ENCODE measurements at regions of chrX and their contacts with region 1.

Region 1: GRCh38 chrX:72126539-72127140 is 5.1 kb downstream of the RTL5 start:
- DNase-seq: peak; percentile 86
- H3K4me3 ChIP-seq: no peak overlapping the region
- H3K27ac ChIP-seq: no peak overlapping the region
- H3K4me1 ChIP-seq: peaks cover 56% of the 10 kb centered on the region
- H3K27me3 ChIP-seq: no peaks in the 10 kb centered on the region
- CTCF ChIP-seq: peak; percentile 67 to 80
- POLR2A ChIP-seq: no peak

Region 2: DNA sequence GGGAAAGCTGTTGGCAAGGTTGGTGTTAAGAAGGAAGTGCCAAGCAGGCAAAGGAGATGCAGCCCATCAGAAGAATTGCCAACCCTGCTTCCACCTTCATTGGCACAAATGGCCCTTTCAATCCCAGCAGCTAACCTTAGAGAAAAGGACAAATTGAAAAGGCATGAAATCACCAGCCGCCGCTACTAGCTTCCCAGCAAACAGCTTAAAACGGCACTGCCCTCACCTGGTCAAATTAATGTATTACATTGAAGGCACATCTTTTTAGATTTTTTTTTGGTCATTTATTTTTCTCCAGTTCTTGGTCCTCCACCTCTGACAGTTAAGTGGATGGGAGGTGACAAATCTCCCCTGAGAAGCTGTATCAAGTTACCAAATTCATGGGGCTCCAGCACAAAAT is 267.0 kb before region 1 on chrX:
- CTCF ChIA-PET with region 1: no interaction called
- POLR2A ChIA-PET with region 1: no interaction called
- dilution Hi-C with region 1: no loop called
- intact Hi-C with region 1: loop called (anchors 2 kb)
- DNase-seq: peak; percentile 20
- H3K4me3 ChIP-seq: no peak overlapping the region
- H3K27ac ChIP-seq: no peak overlapping the region
- H3K4me1 ChIP-seq: no peaks in the 10 kb centered on the region
- H3K27me3 ChIP-seq: peaks cover 0 to 1% of the 10 kb centered on the region in 2 experiments
- CTCF ChIP-seq: peak; percentile 29 to 31
- POLR2A ChIP-seq: no peak

Region 3: DNA sequence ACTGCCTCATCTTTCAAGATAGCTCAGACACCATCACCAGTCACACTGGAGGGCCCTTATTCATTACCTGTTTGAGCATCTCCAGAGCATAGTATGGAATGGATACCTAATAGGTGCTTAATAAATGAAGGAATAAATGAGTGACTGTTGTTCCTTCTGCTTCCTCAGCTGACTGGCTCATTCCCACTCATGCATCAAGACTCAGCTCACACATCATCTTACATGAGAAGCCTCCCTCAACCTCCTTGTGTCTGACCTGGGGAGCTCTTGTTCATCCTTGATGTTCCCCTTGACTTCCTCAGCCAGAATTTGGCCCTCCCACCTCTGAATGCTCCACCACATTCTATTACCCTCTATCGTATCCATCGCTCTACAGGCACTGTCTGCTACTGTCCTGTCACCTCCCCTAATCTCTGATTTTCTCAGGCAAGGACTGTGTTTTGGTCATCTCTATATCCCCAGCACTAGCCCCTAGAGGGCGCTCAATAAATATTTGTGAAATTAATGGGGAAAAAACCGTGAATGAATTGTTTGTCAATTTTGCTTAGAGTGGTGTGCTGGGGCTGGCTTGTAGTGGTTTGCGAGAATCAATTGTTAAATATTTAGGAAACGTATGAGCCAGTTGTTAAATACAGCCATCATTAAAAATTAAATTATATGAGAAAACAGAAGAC is 127.7 kb before region 1 on chrX:
- CTCF ChIA-PET with region 1: interaction called, 31 read pairs
- POLR2A ChIA-PET with region 1: no interaction called
- dilution Hi-C with region 1: no loop called
- intact Hi-C with region 1: loop called (anchors 1 kb)
- DNase-seq: peak; percentile 36
- H3K4me3 ChIP-seq: no peak overlapping the region
- H3K27ac ChIP-seq: no peak overlapping the region
- H3K4me1 ChIP-seq: peaks cover 3% of the 10 kb centered on the region
- H3K27me3 ChIP-seq: no peaks in the 10 kb centered on the region
- CTCF ChIP-seq: peak; percentile 37 to 50
- POLR2A ChIP-seq: no peak

Region 4: GRCh38 chrX:72018277-72019112 is 108.1 kb before region 1 on chrX:
- CTCF ChIA-PET with region 1: interaction called, 122 read pairs
- POLR2A ChIA-PET with region 1: interaction called, 3 read pairs
- dilution Hi-C with region 1: no loop called
- intact Hi-C with region 1: loop called (anchors 1 kb)
- DNase-seq: peak; percentile 90
- H3K4me3 ChIP-seq: no peak overlapping the region
- H3K27ac ChIP-seq: peak overlapping the region; percentile 32
- H3K4me1 ChIP-seq: peaks cover 10% of the 10 kb centered on the region
- H3K27me3 ChIP-seq: no peaks in the 10 kb centered on the region
- CTCF ChIP-seq: peak; percentile 39 to 57
- POLR2A ChIP-seq: no peak

Region 5: DNA sequence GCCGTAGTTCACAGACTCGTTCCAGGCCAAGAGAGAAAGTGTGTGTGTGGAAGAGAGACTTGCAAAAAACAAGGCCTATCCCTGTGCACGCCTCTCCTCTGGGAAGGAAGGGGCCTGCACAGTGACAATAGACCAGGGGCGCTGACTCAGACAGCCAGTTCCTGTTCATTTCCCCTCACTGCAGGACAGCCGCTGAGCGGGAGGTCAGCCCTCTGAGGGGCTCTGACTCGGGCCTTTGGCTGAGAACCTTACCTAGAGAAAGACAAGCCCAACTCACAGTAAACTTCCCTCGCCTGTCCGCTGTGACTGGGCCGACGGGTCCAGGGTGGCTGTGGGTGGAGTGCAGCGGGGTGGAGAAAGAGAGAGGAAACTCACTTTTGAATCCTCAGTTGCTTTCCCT is 47.0 kb before region 1 on chrX:
- CTCF ChIA-PET with region 1: interaction called, 11 read pairs
- POLR2A ChIA-PET with region 1: no interaction called
- dilution Hi-C with region 1: no loop called
- intact Hi-C with region 1: loop called (anchors 1 kb)
- DNase-seq: peak; percentile 87
- H3K4me3 ChIP-seq: peak overlapping the region; percentile 44 to 84 (median 54)
- H3K27ac ChIP-seq: peak overlapping the region; percentile 87
- H3K4me1 ChIP-seq: peaks cover 39% of the 10 kb centered on the region
- H3K27me3 ChIP-seq: no peaks in the 10 kb centered on the region
- CTCF ChIP-seq: no peak
- POLR2A ChIP-seq: peak; percentile 48

Region 6: DNA sequence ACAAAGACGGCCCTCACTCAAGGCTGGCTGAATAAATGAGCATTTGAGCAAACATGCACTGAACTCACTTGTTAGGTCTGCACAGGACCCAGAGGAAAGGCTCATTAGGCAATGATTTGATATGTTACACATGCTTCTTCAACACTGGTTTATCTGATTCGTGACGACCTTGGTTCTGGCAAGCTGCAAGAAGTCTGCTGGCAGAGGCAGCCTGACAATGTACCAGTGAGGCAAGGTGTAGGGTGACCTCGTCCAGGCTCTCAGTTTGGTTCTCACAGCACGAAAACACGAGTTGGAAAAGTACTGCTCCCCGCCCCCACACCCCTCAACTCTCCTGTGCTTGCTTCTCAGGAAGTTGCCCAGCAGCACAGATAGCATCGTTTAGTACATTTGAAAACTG is 242.2 kb after region 1 on chrX:
- CTCF ChIA-PET with region 1: no interaction called
- POLR2A ChIA-PET with region 1: no interaction called
- dilution Hi-C with region 1: no loop called
- intact Hi-C with region 1: no loop called
- DNase-seq: no peak
- H3K4me3 ChIP-seq: no peak overlapping the region
- H3K27ac ChIP-seq: no peak overlapping the region
- H3K4me1 ChIP-seq: no peaks in the 10 kb centered on the region
- H3K27me3 ChIP-seq: no peaks in the 10 kb centered on the region
- CTCF ChIP-seq: no peak
- POLR2A ChIP-seq: no peak

Measured in endothelial cell of umbilical vein (primary cell).